Thyroid gland (tissue), 4 donors: ENCODE measurements at regions of chr21 and their contacts with region 1.

Region 1: DNA sequence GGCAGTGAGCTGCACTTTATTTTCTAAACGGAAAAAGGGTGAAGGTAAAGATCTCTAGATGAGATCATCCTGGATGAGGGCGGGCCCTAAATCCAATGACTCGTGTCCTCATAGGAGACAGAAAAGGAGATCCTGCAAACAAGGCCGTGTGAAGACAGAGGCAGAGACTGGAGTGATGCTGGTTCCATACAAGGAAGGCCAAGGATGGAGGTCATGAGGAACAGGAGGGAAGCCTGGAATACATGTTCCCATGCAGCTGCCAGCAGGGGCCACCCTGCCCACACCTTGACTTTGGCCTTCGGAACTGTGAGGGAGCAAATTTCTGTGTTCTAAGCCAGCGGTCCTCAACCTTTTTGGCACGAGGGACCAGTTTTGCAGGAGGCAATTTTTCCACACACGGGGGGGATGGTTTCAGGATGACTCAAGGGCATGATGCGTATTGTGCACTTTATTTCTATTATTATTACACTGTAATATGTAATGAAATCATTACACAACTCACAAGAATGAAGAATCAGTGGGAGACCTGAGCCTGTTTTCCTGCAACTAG is 94.3 kb downstream of the PSMG1 start:
- DNase-seq: no peak
- H3K4me3 ChIP-seq: no peak overlapping the region
- H3K27ac ChIP-seq: no peak overlapping the region
- H3K4me1 ChIP-seq: peaks cover 14 to 38% of the 10 kb centered on the region in 2 donors
- H3K27me3 ChIP-seq: no peaks in the 10 kb centered on the region
- CTCF ChIP-seq: no peak
- POLR2A ChIP-seq: no peak

Region 2: GRCh38 chr21:39033878-39034602 is 54.9 kb before region 1 on chr21:
- intact Hi-C with region 1: loop called (anchors 10 kb)
- DNase-seq: peak; percentile 93 to 95
- H3K4me3 ChIP-seq: no peak overlapping the region
- H3K27ac ChIP-seq: peak overlapping the region; percentile 87 to 95 (median 94)
- H3K4me1 ChIP-seq: peaks cover 31 to 39% of the 10 kb centered on the region in 2 donors
- H3K27me3 ChIP-seq: no peaks in the 10 kb centered on the region
- CTCF ChIP-seq: peak in 2 of 6 experiments; percentile 30 to 32
- POLR2A ChIP-seq: peak in 1 of 2 donors; percentile 40